T-cell (primary cell): ENCODE measurements at regions of chr10 and their contacts with region 1.

Region 1: GRCh38 chr10:32909456-32909855 is 48.6 kb downstream of the ITGB1 start:
- DNase-seq: no peak
- ATAC-seq: no peak
- H3K4me3 ChIP-seq: no peak overlapping the region
- H3K4me3 Mint-ChIP-seq: no peak overlapping the region
- H3K27ac ChIP-seq: no peak overlapping the region
- H3K27ac Mint-ChIP-seq: peak overlapping the region in 1 of 2 donors; percentile 28
- H3K4me1 ChIP-seq: no peaks in the 10 kb centered on the region
- H3K4me1 Mint-ChIP-seq: peaks cover 0 to 35% (median 2%) of the 10 kb centered on the region in 3 donors
- H3K27me3 ChIP-seq: no peaks in the 10 kb centered on the region
- H3K27me3 Mint-ChIP-seq: no peaks in the 10 kb centered on the region

Region 2: DNA sequence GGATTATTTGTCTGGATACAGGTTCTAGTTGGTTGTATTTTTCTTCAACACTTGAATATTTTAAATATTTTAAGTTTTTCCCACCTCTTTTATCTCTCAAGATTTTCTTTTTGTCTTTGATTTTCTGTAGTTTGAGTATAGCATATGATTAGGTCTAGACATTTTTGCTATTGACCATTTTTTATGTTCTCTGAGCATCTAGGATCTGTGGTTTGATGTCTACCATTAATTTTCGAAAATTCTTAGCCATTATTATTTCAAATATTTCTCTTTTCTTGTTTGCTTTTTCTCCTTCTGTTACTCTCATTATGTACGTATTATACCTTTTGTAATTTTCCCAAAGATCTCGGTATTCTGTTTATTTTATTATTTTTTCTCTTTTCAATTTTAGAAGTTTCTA is 170.5 kb before region 1 on chr10:
- CTCF ChIA-PET with region 1: no interaction called
- POLR2A ChIA-PET with region 1: interaction called in 1 of 2 experiments, 10 read pairs
- DNase-seq: no peak
- ATAC-seq: no peak
- H3K4me3 ChIP-seq: no peak overlapping the region
- H3K4me3 Mint-ChIP-seq: no peak overlapping the region
- H3K27ac ChIP-seq: no peak overlapping the region
- H3K27ac Mint-ChIP-seq: no peak overlapping the region
- H3K4me1 ChIP-seq: no peaks in the 10 kb centered on the region
- H3K4me1 Mint-ChIP-seq: no peaks in the 10 kb centered on the region
- H3K27me3 ChIP-seq: no peaks in the 10 kb centered on the region
- H3K27me3 Mint-ChIP-seq: no peaks in the 10 kb centered on the region

Region 3: GRCh38 chr10:32891261-32891660 is 18.2 kb before region 1 on chr10:
- CTCF ChIA-PET with region 1: no interaction called
- POLR2A ChIA-PET with region 1: no interaction called
- DNase-seq: no peak
- ATAC-seq: no peak
- H3K4me3 ChIP-seq: no peak overlapping the region
- H3K4me3 Mint-ChIP-seq: no peak overlapping the region
- H3K27ac ChIP-seq: no peak overlapping the region
- H3K27ac Mint-ChIP-seq: no peak overlapping the region
- H3K4me1 ChIP-seq: no peaks in the 10 kb centered on the region
- H3K4me1 Mint-ChIP-seq: peaks cover 8 to 19% (median 10%) of the 10 kb centered on the region in 3 donors
- H3K27me3 ChIP-seq: no peaks in the 10 kb centered on the region
- H3K27me3 Mint-ChIP-seq: no peaks in the 10 kb centered on the region

Region 4: GRCh38 chr10:32923134-32923533 is 13.7 kb after region 1 on chr10:
- CTCF ChIA-PET with region 1: no interaction called
- POLR2A ChIA-PET with region 1: no interaction called
- DNase-seq: no peak
- ATAC-seq: no peak
- H3K4me3 ChIP-seq: no peak overlapping the region
- H3K4me3 Mint-ChIP-seq: no peak overlapping the region
- H3K27ac ChIP-seq: no peak overlapping the region
- H3K27ac Mint-ChIP-seq: peak overlapping the region; percentile 78 to 79
- H3K4me1 ChIP-seq: no peaks in the 10 kb centered on the region
- H3K4me1 Mint-ChIP-seq: peaks cover 13 to 48% (median 22%) of the 10 kb centered on the region in 3 donors
- H3K27me3 ChIP-seq: no peaks in the 10 kb centered on the region
- H3K27me3 Mint-ChIP-seq: no peaks in the 10 kb centered on the region

Region 5: DNA sequence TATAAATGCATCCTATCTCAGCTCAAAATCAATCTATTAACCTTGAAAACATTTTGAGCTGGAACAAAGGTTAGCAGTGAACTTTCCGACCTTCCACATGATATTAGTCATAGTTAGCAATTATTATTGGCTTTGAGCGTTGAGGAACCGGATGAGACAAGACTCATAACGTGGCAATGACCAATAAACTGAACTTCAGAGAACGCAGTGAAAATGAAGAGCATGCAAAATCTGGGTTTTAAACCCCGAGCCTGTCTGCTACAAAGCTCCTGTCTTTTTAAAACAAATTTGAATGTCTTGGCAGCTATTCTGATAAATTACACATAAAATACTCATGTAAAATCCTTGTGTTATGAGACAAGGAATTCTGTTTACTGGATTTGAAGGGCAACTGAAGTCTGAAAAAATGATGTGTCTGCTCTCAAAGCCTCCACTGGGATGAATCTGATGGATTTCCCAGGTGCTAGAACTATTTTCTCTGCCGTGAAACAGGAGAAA is 123.2 kb after region 1 on chr10:
- CTCF ChIA-PET with region 1: no interaction called
- POLR2A ChIA-PET with region 1: no interaction called
- DNase-seq: no peak
- ATAC-seq: no peak
- H3K4me3 ChIP-seq: no peak overlapping the region
- H3K4me3 Mint-ChIP-seq: no peak overlapping the region
- H3K27ac ChIP-seq: no peak overlapping the region
- H3K27ac Mint-ChIP-seq: peak overlapping the region; percentile 71 to 77
- H3K4me1 ChIP-seq: peaks cover 0 to 25% of the 10 kb centered on the region in 2 experiments
- H3K4me1 Mint-ChIP-seq: peaks cover 21 to 49% (median 28%) of the 10 kb centered on the region in 3 donors
- H3K27me3 ChIP-seq: peaks cover 0 to 6% of the 10 kb centered on the region in 2 experiments
- H3K27me3 Mint-ChIP-seq: no peaks in the 10 kb centered on the region